ENCODE measurements at regions of chr12 and their contacts with region 1.

Region 1: GRCh38 chr12:91053951-91054715 is 3.7 kb downstream of the KERA start:
- DNase-seq: no peak
- ATAC-seq: no peak
- H3K4me3 Mint-ChIP-seq: no peak overlapping the region
- H3K27ac Mint-ChIP-seq: no peak overlapping the region
- H3K4me1 Mint-ChIP-seq: no peaks in the 10 kb centered on the region
- H3K27me3 Mint-ChIP-seq: peaks cover 3% of the 10 kb centered on the region

Region 2: DNA sequence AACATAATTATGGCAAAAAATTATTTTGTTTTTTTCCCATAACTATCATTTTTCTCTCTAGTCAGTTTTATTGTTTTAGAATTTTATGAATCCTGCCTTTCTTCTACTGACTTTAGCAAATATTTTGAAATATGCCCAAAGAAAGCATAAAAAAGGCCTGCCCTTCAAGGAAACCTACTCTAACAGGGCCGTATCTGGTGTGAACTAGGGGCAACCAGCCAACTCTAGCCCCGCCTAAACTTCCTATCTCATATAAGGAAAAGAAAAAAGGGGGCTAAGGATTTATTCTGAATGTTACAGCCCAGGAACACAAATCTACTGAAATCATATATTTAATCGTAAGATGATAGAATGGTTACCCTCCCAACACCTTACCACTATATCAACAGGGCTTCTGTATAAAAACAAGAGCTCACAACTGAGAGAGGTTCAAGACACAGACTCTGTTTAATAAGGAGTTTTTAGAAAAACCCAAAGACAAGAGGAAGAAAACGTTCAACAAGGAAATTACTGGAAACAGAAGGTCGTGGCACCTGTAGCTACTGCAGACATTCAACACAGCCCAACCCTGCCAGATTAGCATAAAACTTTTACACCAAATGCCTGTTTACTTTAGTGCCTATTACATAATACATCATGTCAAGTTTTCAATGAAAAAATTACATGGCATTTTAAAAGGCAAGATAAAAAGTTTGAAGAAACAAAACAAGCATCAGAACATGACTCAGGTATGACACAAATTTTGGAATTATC is 36.4 kb before region 1 on chr12:
- CTCF ChIA-PET with region 1: no interaction called
- POLR2A ChIA-PET with region 1: no interaction called
- intact Hi-C with region 1: loop called in 1 of 2 experiments (anchors 1 kb)
- DNase-seq: no peak
- ATAC-seq: no peak
- H3K4me3 Mint-ChIP-seq: no peak overlapping the region
- H3K27ac Mint-ChIP-seq: no peak overlapping the region
- H3K4me1 Mint-ChIP-seq: no peaks in the 10 kb centered on the region
- H3K27me3 Mint-ChIP-seq: peaks cover 4% of the 10 kb centered on the region

Measured in activated CD4-positive, alpha-beta T cell treated with anti-CD3 and anti-CD28 coated beads for 36 hours (primary cell).